ENCODE measurements at regions of chr3 and their contacts with region 1.

Region 1: DNA sequence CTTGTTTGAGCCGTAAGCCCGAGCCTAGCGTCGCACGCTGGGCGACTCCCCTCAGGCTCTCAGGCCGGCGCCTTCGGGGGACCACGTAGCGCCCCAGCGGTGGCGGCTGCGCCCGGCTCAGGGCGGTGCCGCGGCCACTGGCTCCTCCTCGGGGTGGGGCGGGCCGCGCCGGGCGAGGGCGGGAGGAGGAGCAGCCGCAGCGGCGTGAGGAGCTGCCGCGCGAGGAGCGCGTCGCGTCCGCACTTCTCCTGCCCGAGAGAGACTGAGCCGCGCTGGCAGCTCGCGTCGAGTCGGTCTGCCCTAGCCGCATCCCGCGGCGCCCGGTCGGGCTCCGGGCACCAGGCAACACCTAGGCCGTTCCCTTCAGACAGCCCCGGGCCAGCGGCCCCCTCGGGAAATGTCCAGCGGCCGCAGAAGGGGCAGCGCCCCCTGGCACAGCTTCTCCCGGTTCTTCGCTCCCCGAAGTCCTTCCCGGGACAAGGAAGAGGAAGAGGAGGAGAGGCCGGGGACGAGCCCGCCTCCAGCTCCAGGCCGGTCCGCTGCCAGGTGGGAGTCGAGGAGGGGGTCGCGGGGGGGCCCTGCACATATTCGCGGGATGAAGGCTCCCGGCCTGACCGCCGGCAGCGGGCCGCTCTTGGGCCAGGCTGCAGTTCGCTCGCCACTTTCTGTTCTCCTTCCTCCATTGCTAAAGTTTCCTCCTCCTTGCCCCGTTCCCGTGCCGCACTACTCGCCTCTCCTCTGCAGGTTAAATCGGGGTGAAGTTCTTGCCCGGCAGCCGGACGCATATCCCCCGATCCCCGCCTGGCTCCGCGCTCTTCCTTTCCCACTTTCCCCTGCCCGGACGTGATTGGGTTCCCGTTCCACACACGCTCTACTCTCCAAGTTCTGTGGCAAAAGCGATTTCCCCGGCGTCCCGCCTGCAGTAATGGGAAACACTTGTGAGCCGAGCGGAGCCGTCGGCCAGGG is at the start of gene CRYBG3:
- DNase-seq: peak; percentile 35
- ATAC-seq: peak; percentile 99
- H3K4me3 ChIP-seq: peak within 1 kb of the TSS; percentile 70 to 75
- H3K27ac ChIP-seq: peak within 1 kb of the TSS; percentile 67
- H3K4me1 ChIP-seq: peaks cover 7 to 9% of the 10 kb centered on the region in 2 experiments; a peak in 3 of 4 replicates
- H3K27me3 ChIP-seq: no peaks in the 10 kb centered on the region
- CTCF ChIP-seq: peak in 2 of 3 experiments; percentile 24 to 33; a peak in 2 of 6 replicates
- POLR2A ChIP-seq: no peak
- RAD21 ChIP-seq: no peak
- total RNA-seq, gene CRYBG3: 7.5 TPM

Region 2: GRCh38 chr3:97971677-97972567 is 149.8 kb after region 1 on chr3 and contains the start of gene RIOX2:
- CTCF ChIA-PET with region 1: no interaction called
- POLR2A ChIA-PET with region 1: no interaction called
- RAD21 ChIA-PET with region 1: no interaction called
- intact Hi-C with region 1: loop called (anchors 5 kb)
- DNase-seq: peak; percentile 32
- ATAC-seq: peak; percentile 95
- H3K4me3 ChIP-seq: peak within 1 kb of the TSS; percentile 64 to 75
- H3K27ac ChIP-seq: peak within 1 kb of the TSS; percentile 64
- H3K4me1 ChIP-seq: peaks cover 6 to 19% of the 10 kb centered on the region in 2 experiments
- H3K27me3 ChIP-seq: no peaks in the 10 kb centered on the region
- CTCF ChIP-seq: no peak
- POLR2A ChIP-seq: peak; percentile 77
- RAD21 ChIP-seq: no peak
- total RNA-seq, gene RIOX2: 39.1 TPM

Region 3: GRCh38 chr3:98003306-98003969 is 181.3 kb after region 1 on chr3:
- CTCF ChIA-PET with region 1: no interaction called
- POLR2A ChIA-PET with region 1: no interaction called
- RAD21 ChIA-PET with region 1: no interaction called
- intact Hi-C with region 1: no loop called
- DNase-seq: no peak
- ATAC-seq: no peak
- H3K4me3 ChIP-seq: no peak overlapping the region
- H3K27ac ChIP-seq: no peak overlapping the region
- H3K4me1 ChIP-seq: no peaks in the 10 kb centered on the region
- H3K27me3 ChIP-seq: no peaks in the 10 kb centered on the region
- CTCF ChIP-seq: no peak
- POLR2A ChIP-seq: no peak
- RAD21 ChIP-seq: no peak